CD14-positive monocyte (primary cell): ENCODE measurements at regions of chr1 and their contacts with region 1.

Region 1: GRCh38 chr1:24502709-24503058 is at the start of gene RCAN3:
- DNase-seq: peak; percentile 49 to 68 (median 61)
- H3K4me3 ChIP-seq: peak within 1 kb of the TSS; percentile 61 to 91 (median 88)
- H3K4me3 Mint-ChIP-seq: peak within 1 kb of the TSS; percentile 97 to 98
- H3K27ac ChIP-seq: peak within 1 kb of the TSS; percentile 89 to 90
- H3K27ac Mint-ChIP-seq: peak within 1 kb of the TSS; percentile 83 to 95 (median 92)
- H3K4me1 ChIP-seq: peaks cover 20 to 34% of the 10 kb centered on the region in 2 donors
- H3K4me1 Mint-ChIP-seq: peaks cover 43% of the 10 kb centered on the region
- H3K27me3 ChIP-seq: no peaks in the 10 kb centered on the region
- H3K27me3 Mint-ChIP-seq: peaks cover 0 to 1% (median 1%) of the 10 kb centered on the region in 3 donors
- CTCF ChIP-seq: no peak
- polyA plus RNA-seq, gene RCAN3: 7.1 to 9.1 (median 8.8) TPM

Region 2: DNA sequence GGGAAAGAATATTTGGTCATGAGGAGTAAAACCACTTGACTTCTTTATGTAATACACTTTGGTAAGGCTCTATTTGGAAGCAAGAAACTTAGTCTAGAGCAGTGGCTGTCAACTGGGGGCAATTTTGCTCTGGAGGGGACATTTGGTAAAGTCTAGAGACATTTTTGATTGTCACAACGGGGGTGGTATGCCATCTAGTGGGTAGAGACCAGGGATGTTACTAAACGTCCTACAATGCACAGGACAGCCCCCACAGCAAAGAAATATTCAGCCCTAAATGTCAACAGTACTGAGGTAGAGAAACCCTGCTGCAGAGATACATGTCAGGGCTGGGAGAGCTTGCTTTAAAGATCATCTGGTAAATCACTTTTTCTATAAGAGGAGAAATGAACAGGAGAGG is 648.1 kb before region 1 on chr1:
- intact Hi-C with region 1: no loop called
- DNase-seq: no peak
- H3K4me3 ChIP-seq: no peak overlapping the region
- H3K4me3 Mint-ChIP-seq: no peak overlapping the region
- H3K27ac ChIP-seq: no peak overlapping the region
- H3K27ac Mint-ChIP-seq: no peak overlapping the region
- H3K4me1 ChIP-seq: no peaks in the 10 kb centered on the region
- H3K4me1 Mint-ChIP-seq: no peaks in the 10 kb centered on the region
- H3K27me3 ChIP-seq: no peaks in the 10 kb centered on the region
- H3K27me3 Mint-ChIP-seq: no peaks in the 10 kb centered on the region
- CTCF ChIP-seq: no peak

Region 3: DNA sequence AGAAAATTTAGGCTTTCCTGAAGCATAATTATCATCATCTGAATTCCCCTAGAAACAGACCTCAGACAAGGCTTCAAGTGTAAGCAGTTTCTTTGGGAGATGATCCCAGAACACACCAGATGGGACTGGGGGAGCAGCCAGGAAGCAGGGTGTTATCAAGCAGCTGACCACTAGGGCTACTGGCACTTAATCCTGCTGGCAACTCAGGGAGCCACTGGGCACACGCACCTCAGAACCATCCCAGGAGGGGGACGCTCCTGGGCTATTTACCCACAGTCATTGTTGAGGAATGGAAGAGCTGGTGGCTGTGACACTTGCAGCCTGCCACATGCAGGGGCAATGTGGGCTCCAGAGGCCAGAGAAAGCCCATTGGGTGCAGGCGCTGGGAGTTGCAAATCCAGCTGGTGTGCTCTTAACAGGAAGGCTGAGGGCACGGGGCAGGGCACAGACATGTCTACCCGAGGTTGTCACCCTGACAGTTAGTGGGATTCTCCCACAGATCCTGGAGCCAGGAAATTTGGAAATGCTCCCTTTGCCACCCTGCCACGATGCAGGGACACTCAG is 344.7 kb before region 1 on chr1:
- intact Hi-C with region 1: no loop called
- DNase-seq: no peak
- H3K4me3 ChIP-seq: no peak overlapping the region
- H3K4me3 Mint-ChIP-seq: no peak overlapping the region
- H3K27ac ChIP-seq: no peak overlapping the region
- H3K27ac Mint-ChIP-seq: peak overlapping the region in 1 of 7 donors; percentile 22
- H3K4me1 ChIP-seq: no peaks in the 10 kb centered on the region
- H3K4me1 Mint-ChIP-seq: peaks cover 4% of the 10 kb centered on the region
- H3K27me3 ChIP-seq: peaks cover 0 to 1% of the 10 kb centered on the region in 2 donors
- H3K27me3 Mint-ChIP-seq: peaks cover 8 to 15% (median 11%) of the 10 kb centered on the region in 3 donors
- CTCF ChIP-seq: peak; percentile 32

Region 4: DNA sequence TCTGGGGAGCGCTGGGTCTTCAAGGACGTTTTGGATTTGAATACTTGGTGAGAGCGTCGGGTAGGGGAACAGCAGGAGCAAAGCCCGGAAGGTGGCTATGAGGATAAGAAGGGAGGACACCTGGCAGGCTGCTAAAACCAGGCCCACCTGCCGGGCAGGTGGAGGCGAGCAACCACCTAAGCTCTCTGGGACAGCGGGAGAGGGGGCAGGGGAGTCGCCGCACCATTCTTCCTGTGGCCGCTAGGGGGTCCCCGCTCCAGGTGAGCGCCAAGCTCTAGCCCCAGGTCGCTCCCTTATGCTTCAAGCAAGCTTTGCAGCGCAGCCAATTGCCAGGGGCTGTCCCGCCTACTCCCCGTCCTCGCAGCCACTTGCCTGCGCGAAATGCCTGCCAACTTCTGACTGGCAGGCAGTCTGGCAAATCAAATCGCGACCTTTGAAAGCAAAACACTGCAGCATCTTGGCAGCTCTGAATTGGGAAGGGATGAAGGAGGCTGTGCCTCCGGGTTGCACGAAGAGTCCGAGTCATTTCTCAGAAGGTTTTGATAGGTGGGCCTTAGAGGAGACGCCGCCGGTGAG is 87.3 kb before region 1 on chr1 and contains the start of gene NIPAL3:
- intact Hi-C with region 1: loop called in 1 of 2 experiments (anchors 5 kb)
- DNase-seq: peak; percentile 96 to 97 (median 96)
- H3K4me3 ChIP-seq: peak within 1 kb of the TSS; percentile 58 to 95 (median 73)
- H3K4me3 Mint-ChIP-seq: peak within 1 kb of the TSS; percentile 97 to 99
- H3K27ac ChIP-seq: peak within 1 kb of the TSS in 1 of 2 donors; percentile 79
- H3K27ac Mint-ChIP-seq: peak within 1 kb of the TSS; percentile 75 to 90 (median 83)
- H3K4me1 ChIP-seq: peaks cover 40 to 61% of the 10 kb centered on the region in 2 donors
- H3K4me1 Mint-ChIP-seq: peaks cover 65% of the 10 kb centered on the region
- H3K27me3 ChIP-seq: no peaks in the 10 kb centered on the region
- H3K27me3 Mint-ChIP-seq: peaks cover 0 to 6% (median 0%) of the 10 kb centered on the region in 3 donors
- CTCF ChIP-seq: peak; percentile 63
- polyA plus RNA-seq, gene NIPAL3: 5.9 to 9.6 (median 6.6) TPM

Region 5: GRCh38 chr1:24472527-24473251 is 30.0 kb before region 1 on chr1:
- intact Hi-C with region 1: loop called in 1 of 2 experiments (anchors 5 kb)
- DNase-seq: no peak
- H3K4me3 ChIP-seq: no peak overlapping the region
- H3K4me3 Mint-ChIP-seq: no peak overlapping the region
- H3K27ac ChIP-seq: no peak overlapping the region
- H3K27ac Mint-ChIP-seq: no peak overlapping the region
- H3K4me1 ChIP-seq: peaks cover 0 to 7% of the 10 kb centered on the region in 2 donors
- H3K4me1 Mint-ChIP-seq: peaks cover 11% of the 10 kb centered on the region
- H3K27me3 ChIP-seq: no peaks in the 10 kb centered on the region
- H3K27me3 Mint-ChIP-seq: peaks cover 0 to 2% (median 0%) of the 10 kb centered on the region in 3 donors
- CTCF ChIP-seq: no peak